Body of pancreas (tissue), 4 donors: ENCODE measurements at regions of chr12 and their contacts with region 1.

Region 1: GRCh38 chr12:4287325-4288211 is 14.0 kb downstream of the CCND2 start:
- DNase-seq: no peak
- ATAC-seq: no peak
- H3K4me3 ChIP-seq: no peak overlapping the region
- H3K27ac ChIP-seq: peak overlapping the region in 1 of 4 donors; percentile 58
- H3K4me1 ChIP-seq: peaks cover 4% of the 10 kb centered on the region
- H3K27me3 ChIP-seq: no peaks in the 10 kb centered on the region
- CTCF ChIP-seq: no peak
- POLR2A ChIP-seq: no peak

Region 2: GRCh38 chr12:3998968-3999826 is 288.4 kb before region 1 on chr12:
- intact Hi-C with region 1: loop called (anchors 10 kb)
- DNase-seq: peak; percentile 90 to 98 (median 94)
- ATAC-seq: peak; percentile 98
- H3K4me3 ChIP-seq: no peak overlapping the region
- H3K27ac ChIP-seq: peak overlapping the region; percentile 85 to 95 (median 92)
- H3K4me1 ChIP-seq: peaks cover 69% of the 10 kb centered on the region
- H3K27me3 ChIP-seq: no peaks in the 10 kb centered on the region
- CTCF ChIP-seq: no peak
- POLR2A ChIP-seq: peak in 2 of 3 donors; percentile 33 to 47